WTC11 (cell line): ENCODE measurements at regions of chr14 and their contacts with region 1.

Region 1: DNA sequence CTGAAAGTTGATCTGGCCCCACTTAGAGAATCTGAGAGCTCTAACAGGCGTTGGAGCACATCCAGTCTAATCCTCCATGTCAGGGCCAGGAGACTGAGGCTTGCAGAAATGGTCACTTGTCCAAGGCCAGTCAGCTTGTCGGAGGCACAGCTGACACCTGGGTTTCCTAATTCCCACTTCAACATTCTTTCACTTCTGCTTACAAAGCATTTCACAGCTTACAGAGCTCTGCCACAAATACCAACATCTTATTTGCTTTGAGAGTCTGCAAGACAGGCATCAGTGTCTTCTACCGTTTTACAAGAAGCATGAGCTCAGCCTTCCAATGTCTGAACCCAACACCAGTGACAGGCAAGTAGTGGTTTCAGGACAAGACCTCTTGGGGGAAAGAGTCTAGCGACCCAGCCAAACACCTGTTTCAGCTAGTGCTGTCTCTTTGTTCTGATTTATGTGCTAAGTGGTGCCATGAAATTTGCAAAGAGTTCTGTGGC is 31.8 kb downstream of the ISCA2 start:
- DNase-seq: no peak
- ATAC-seq: no peak
- H3K4me3 Mint-ChIP-seq: no peak overlapping the region
- H3K27ac Mint-ChIP-seq: no peak overlapping the region
- H3K4me1 Mint-ChIP-seq: peaks cover 4% of the 10 kb centered on the region
- H3K27me3 Mint-ChIP-seq: no peaks in the 10 kb centered on the region
- CTCF ChIP-seq: no peak

Region 2: GRCh38 chr14:74508292-74508731 is 17.1 kb before region 1 on chr14:
- CTCF ChIA-PET with region 1: interaction called, 25 read pairs
- POLR2A ChIA-PET with region 1: no interaction called
- DNase-seq: peak; percentile 76
- ATAC-seq: peak; percentile 92
- H3K4me3 Mint-ChIP-seq: no peak overlapping the region
- H3K27ac Mint-ChIP-seq: no peak overlapping the region
- H3K4me1 Mint-ChIP-seq: peaks cover 25% of the 10 kb centered on the region
- H3K27me3 Mint-ChIP-seq: peaks cover 8% of the 10 kb centered on the region
- CTCF ChIP-seq: no peak